ENCODE measurements at regions of chrX and their contacts with region 1.

Region 1: GRCh38 chrX:110146521-110146920 is 143.6 kb downstream of the TMEM164 start:
- DNase-seq: peak; percentile 42
- H3K4me3 Mint-ChIP-seq: no peak overlapping the region
- H3K27ac Mint-ChIP-seq: no peak overlapping the region
- H3K4me1 Mint-ChIP-seq: no peaks in the 10 kb centered on the region
- H3K27me3 Mint-ChIP-seq: no peaks in the 10 kb centered on the region

Region 2: DNA sequence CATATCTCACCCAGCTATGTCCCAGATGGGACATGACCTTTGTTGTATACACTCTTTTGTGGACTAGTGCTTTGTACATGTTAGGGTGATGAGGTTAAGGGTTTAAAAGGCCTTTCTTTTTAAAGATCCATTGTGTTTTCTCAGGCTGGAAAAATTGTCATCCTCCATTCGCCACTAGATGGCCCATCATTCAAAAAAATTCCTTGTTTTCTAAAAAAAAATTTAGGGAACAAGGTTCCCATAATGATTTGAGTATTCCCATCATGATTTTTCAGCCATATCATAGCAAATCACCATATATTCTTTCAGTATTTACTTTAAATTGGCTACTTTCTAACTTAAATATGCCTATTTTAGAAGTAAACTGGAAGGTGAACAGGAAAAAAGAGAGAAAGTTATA is 235.5 kb before region 1 on chrX:
- CTCF ChIA-PET with region 1: interaction called, 12 read pairs
- DNase-seq: no peak
- H3K4me3 Mint-ChIP-seq: no peak overlapping the region
- H3K27ac Mint-ChIP-seq: no peak overlapping the region
- H3K4me1 Mint-ChIP-seq: no peaks in the 10 kb centered on the region
- H3K27me3 Mint-ChIP-seq: no peaks in the 10 kb centered on the region

Region 3: GRCh38 chrX:110066488-110067225 is 79.9 kb before region 1 on chrX:
- CTCF ChIA-PET with region 1: no interaction called
- DNase-seq: no peak
- H3K4me3 Mint-ChIP-seq: no peak overlapping the region
- H3K27ac Mint-ChIP-seq: no peak overlapping the region
- H3K4me1 Mint-ChIP-seq: no peaks in the 10 kb centered on the region
- H3K27me3 Mint-ChIP-seq: no peaks in the 10 kb centered on the region

Region 4: GRCh38 chrX:110167952-110168451 is 21.5 kb after region 1 on chrX:
- CTCF ChIA-PET with region 1: interaction called, 11 read pairs
- DNase-seq: peak; percentile 52
- H3K4me3 Mint-ChIP-seq: no peak overlapping the region
- H3K27ac Mint-ChIP-seq: no peak overlapping the region
- H3K4me1 Mint-ChIP-seq: no peaks in the 10 kb centered on the region
- H3K27me3 Mint-ChIP-seq: no peaks in the 10 kb centered on the region

Region 5: GRCh38 chrX:110407910-110408545 is 261.5 kb after region 1 on chrX:
- CTCF ChIA-PET with region 1: interaction called, 409 read pairs
- DNase-seq: peak; percentile 49
- H3K4me3 Mint-ChIP-seq: no peak overlapping the region
- H3K27ac Mint-ChIP-seq: no peak overlapping the region
- H3K4me1 Mint-ChIP-seq: no peaks in the 10 kb centered on the region
- H3K27me3 Mint-ChIP-seq: peaks cover 2% of the 10 kb centered on the region

Region 6: GRCh38 chrX:110412971-110413721 is 266.6 kb after region 1 on chrX:
- CTCF ChIA-PET with region 1: interaction called, 409 read pairs
- DNase-seq: peak; percentile 74
- H3K4me3 Mint-ChIP-seq: no peak overlapping the region
- H3K27ac Mint-ChIP-seq: no peak overlapping the region
- H3K4me1 Mint-ChIP-seq: no peaks in the 10 kb centered on the region
- H3K27me3 Mint-ChIP-seq: peaks cover 4% of the 10 kb centered on the region

Measured in activated naive CD4-positive, alpha-beta T cell treated with anti-CD3 and anti-CD28 coated beads, Interleukin-2, amount 10 ng/mL, durations not matched to agents 7 days and 5 days (primary cell).